ENCODE measurements at regions of chr6 and their contacts with region 1.

Region 1: GRCh38 chr6:26596579-26597388 is at the start of gene ABT1:
- DNase-seq: peak; percentile 85
- H3K4me3 ChIP-seq: peak within 1 kb of the TSS; percentile 100
- CTCF ChIP-seq: no peak

Region 2: GRCh38 chr6:26175428-26176181 is 421.2 kb before region 1 on chr6:
- CTCF ChIA-PET with region 1: interaction called, 25 read pairs
- POLR2A ChIA-PET with region 1: no interaction called
- DNase-seq: no peak
- H3K4me3 ChIP-seq: no peak overlapping the region
- CTCF ChIP-seq: peak; percentile 40

Region 3: DNA sequence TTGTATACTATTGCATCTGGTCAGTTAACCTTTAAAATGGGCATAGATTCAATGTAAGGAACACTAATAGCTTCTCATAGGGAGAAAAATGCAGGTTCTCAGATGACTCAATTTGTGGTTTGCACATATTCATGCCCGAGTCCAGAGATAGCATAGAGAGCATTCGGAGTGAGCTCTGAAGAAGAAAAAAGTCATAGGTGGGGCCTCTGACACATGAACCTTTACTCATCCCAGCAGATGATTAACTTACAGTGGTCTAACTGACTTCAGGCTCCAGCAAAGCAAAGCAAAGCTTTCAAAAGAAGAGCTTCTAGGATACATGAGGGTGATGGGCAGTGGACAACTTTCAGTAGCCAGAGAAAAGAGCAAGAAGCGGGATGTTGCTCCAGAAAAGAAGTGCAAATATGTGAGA is 287.0 kb before region 1 on chr6:
- CTCF ChIA-PET with region 1: interaction called, 12 read pairs
- POLR2A ChIA-PET with region 1: no interaction called
- DNase-seq: no peak
- H3K4me3 ChIP-seq: no peak overlapping the region
- CTCF ChIP-seq: no peak

Region 4: DNA sequence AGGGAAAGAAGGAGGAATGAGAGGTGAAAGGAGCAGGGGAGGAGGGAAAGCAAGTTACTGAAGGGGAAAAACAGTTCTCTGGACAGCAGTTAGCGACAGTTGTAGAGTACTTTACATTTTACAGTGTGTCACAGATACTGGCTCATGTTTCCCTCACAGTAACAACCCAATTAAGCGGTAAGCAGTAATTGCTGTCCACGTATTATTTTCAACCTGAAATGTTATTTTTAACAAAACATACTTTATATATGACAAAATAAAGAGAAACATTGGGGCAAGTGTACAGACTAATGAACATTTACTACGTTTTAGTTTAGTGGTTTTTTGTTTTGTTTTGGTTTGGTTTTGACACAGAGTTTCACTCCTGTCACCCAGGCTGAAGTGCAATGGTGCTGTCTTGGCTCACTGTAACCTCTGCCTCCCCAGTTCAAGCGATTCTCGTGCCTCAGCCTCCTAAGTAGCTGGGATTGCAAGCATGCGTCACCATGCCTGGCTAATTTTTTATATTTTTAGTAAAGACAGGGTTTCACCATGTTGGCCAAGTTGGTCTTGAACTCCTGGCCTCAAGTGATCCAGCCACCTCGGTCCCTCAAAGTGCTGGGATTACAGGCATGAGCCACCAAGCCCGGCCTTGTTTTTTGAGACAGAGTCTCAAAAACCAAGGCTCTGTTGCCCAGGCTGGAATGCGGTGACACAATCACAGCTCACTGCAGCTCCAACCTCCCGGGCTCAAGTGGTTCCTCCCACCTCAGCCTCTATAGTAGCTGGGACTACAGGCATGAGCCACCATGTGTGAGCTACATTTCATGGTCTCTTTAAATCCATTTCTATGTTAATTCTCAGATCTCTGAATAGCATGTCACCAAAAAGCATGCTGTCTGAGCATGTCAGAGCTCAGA is 254.4 kb before region 1 on chr6:
- CTCF ChIA-PET with region 1: interaction called, 183 read pairs
- POLR2A ChIA-PET with region 1: no interaction called
- DNase-seq: no peak
- H3K4me3 ChIP-seq: peak overlapping the region; percentile 37
- CTCF ChIP-seq: no peak

Region 5: GRCh38 chr6:26568601-26569432 is 28.0 kb before region 1 on chr6:
- CTCF ChIA-PET with region 1: interaction called, 380 read pairs
- POLR2A ChIA-PET with region 1: interaction called, 8 read pairs
- DNase-seq: no peak
- H3K4me3 ChIP-seq: peak overlapping the region; percentile 80
- CTCF ChIP-seq: peak; percentile 18

Region 6: DNA sequence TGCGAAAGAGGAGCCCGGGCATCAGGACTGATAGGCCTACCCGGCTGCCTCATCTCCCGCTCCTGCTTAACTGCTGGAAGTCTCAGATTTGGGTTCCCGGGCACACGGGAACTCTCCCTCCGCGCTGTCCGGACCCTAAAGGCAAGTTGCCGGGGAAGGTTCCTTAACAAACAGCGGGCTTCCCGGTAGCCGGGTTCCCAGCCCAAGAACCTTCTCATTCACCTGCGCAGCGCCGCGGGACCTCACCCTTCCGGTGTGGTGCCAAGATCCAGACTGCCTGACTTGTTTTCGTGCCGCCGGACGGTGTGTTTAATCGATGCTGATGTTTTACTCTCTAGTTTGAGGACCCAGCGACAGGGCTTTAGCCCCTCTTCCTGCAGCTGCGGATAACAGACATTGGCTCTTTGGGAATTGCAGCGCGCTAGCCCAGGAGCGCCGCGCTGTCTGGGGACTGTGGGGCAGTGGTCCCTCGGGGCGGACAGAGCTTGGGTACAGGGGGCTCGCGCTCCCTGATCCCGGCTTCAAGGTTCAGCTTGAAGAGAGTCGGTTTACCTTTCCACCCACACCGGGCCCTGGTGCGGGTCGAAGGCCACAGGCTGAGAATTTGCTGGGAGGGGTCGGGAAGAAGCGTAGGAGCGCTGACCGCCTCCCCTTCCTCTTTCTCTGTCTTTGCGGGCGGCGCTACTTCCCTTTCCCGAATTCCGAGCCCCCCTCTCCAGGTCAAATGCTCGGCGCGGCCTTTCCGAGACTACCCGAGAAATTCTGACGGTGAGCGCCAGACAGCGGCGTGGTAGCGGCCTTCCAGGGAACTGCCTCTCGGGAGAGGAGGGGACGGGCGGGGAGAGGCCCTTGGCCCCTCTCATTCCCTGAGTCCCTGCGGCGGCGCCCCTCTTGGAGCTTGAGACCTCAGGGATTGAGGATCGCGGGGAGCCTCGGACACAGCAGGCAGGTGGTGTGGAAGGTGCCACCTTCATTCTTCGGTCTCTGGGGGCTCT is 17.2 kb after region 1 on chr6:
- CTCF ChIA-PET with region 1: no interaction called
- POLR2A ChIA-PET with region 1: no interaction called
- DNase-seq: no peak
- H3K4me3 ChIP-seq: no peak overlapping the region
- CTCF ChIP-seq: no peak

Region 7: GRCh38 chr6:27078734-27079357 is 482.1 kb after region 1 on chr6:
- CTCF ChIA-PET with region 1: interaction called, 21 read pairs
- POLR2A ChIA-PET with region 1: no interaction called
- DNase-seq: peak; percentile 21
- H3K4me3 ChIP-seq: peak overlapping the region; percentile 38
- CTCF ChIP-seq: peak; percentile 56

Measured in AG04449 (cell line).